Breast epithelium (tissue), 4 donors: ENCODE measurements at regions of chr1 and their contacts with region 1.

Region 1: DNA sequence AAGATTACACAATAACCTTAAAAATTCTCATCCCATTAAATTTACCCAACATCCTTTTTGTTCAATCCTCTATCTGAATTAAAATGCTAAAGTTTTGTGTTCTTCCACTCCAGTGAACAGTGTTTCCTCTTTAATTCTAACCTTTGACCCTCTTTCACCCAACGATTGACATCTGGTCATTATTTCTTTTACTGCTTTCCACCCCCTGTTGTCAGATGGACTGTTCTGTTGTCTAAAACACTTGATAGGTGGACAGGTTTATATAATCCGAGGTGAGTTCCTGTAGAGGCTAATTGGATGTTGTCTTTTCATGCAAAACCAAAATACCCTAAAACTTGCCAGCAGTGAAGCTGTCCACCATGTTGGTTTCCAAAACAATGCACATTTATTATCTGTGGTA is 73.4 kb upstream of the SERTAD4 start:
- DNase-seq: no peak
- H3K4me3 ChIP-seq: no peak overlapping the region
- H3K27ac ChIP-seq: no peak overlapping the region
- H3K4me1 ChIP-seq: no peaks in the 10 kb centered on the region
- H3K27me3 ChIP-seq: no peaks in the 10 kb centered on the region
- CTCF ChIP-seq: no peak
- POLR2A ChIP-seq: no peak

Region 2: GRCh38 chr1:210978316-210978993 is 819.2 kb after region 1 on chr1:
- intact Hi-C with region 1: loop called (anchors 5 kb)
- DNase-seq: no peak
- H3K4me3 ChIP-seq: no peak overlapping the region
- H3K27ac ChIP-seq: no peak overlapping the region
- H3K4me1 ChIP-seq: no peaks in the 10 kb centered on the region
- H3K27me3 ChIP-seq: no peaks in the 10 kb centered on the region
- CTCF ChIP-seq: no peak
- POLR2A ChIP-seq: no peak